Transverse colon (tissue), 4 donors: ENCODE measurements at regions of chr1 and their contacts with region 1.

Region 1: GRCh38 chr1:105686874-105687690 is 1369.4 kb upstream of the PRMT6 start:
- DNase-seq: no peak
- H3K4me3 ChIP-seq: no peak overlapping the region
- H3K27ac ChIP-seq: no peak overlapping the region
- H3K4me1 ChIP-seq: no peaks in the 10 kb centered on the region
- H3K27me3 ChIP-seq: no peaks in the 10 kb centered on the region
- CTCF ChIP-seq: no peak
- EP300 ChIP-seq: no peak
- POLR2A ChIP-seq: no peak

Region 2: DNA sequence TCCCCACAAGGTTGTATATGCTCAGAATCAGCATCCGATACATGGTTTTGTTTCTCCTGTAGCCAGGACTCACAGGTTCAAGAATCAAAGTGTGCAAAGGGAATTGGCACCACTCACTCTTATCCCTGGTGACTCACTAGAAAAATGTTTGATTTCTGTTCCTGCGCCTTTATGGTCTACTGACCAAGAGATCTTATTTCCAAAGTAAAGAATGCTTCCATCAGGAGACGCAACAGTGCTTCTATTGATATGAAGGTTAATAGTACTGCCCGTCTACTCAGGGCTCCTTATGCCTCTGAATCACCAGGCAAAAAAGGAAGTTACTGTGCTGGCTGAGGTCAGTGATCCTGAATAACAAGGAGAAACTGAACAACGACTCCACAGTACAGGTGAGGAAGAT is 22.6 kb before region 1 on chr1:
- in situ Hi-C with region 1: no loop called
- intact Hi-C with region 1: no loop called
- DNase-seq: no peak
- H3K4me3 ChIP-seq: no peak overlapping the region
- H3K27ac ChIP-seq: no peak overlapping the region
- H3K4me1 ChIP-seq: no peaks in the 10 kb centered on the region
- H3K27me3 ChIP-seq: no peaks in the 10 kb centered on the region
- CTCF ChIP-seq: no peak
- EP300 ChIP-seq: no peak
- POLR2A ChIP-seq: no peak

Region 3: GRCh38 chr1:105724286-105724685 is 37.2 kb after region 1 on chr1:
- in situ Hi-C with region 1: no loop called
- intact Hi-C with region 1: loop called (anchors 2 kb)
- DNase-seq: no peak
- H3K4me3 ChIP-seq: no peak overlapping the region
- H3K27ac ChIP-seq: no peak overlapping the region
- H3K4me1 ChIP-seq: no peaks in the 10 kb centered on the region
- H3K27me3 ChIP-seq: no peaks in the 10 kb centered on the region
- CTCF ChIP-seq: no peak
- EP300 ChIP-seq: no peak
- POLR2A ChIP-seq: no peak